ENCODE measurements at regions of chr5 and their contacts with region 1.

Region 1: DNA sequence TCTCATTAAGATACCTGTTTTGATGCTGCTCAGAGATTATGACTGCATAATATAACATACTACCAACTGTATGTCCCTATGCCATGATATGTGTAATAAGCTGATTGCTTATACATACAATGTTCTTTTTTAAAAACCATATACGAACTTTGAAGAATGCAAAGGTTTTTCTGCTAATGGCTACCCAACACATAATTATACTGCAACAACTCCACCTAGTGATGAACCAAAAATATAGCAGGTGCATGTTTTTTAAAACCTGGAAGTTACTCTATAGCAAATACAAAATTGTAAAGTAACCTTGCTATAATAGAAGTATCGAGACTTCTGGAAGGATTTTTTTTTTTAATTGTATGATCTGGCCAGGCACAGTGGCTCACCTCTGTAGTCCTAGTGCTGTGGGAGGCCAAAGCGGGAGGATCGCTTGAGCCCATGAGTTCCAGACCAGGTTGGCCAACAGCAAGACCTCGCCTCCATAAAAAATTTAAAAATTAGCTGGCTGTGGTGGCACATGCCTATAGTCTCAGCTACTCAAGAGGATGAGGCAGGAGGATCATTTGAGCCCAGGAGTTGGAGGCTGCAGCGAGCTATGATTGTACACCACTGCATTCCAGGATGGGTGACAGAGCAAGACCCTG is 49.1 kb downstream of the HOMER1 start:
- DNase-seq: no peak

Region 2: GRCh38 chr5:79020861-79021561 is 443.8 kb before region 1 on chr5:
- intact Hi-C with region 1: loop called (anchors 5 kb)
- DNase-seq: no peak

Region 3: DNA sequence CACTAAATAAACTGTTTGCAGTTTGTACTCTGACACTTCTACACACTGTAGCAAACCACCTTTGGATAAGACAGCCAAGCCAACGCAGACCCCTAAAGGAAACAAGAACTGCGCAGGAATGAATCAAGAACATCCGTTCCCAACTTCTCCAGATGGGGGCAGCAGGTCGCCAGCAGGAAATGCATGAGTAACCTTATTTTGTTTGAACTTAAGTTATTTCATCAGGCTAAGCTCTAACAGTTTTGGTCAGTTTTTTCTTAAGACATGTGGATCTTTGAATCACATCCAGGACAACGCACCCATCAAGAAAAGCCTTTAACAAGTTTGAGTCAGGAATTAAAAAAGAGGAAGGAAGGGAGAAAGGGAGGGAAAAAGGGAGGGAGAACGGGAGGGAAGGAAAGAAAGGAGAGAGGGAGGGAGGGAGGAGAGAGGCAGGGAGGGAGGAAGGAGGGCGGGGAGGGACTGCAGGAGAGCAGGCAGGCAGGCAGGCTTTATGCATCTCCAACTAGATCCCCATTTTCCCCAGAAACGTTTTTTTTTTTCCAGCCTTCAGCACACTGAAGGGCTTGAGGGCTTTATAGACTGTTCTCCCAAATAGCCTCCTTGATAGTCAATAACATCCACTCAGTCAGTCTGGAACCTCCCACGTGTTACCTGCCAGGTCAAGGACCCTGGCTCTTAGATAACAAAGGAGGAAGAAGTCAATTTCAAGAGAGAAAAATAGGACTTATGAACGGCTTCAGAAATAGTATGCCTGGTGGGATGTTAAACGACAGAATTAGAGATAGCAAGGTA is 331.0 kb before region 1 on chr5:
- intact Hi-C with region 1: loop called (anchors 5 kb)
- DNase-seq: no peak

Region 4: DNA sequence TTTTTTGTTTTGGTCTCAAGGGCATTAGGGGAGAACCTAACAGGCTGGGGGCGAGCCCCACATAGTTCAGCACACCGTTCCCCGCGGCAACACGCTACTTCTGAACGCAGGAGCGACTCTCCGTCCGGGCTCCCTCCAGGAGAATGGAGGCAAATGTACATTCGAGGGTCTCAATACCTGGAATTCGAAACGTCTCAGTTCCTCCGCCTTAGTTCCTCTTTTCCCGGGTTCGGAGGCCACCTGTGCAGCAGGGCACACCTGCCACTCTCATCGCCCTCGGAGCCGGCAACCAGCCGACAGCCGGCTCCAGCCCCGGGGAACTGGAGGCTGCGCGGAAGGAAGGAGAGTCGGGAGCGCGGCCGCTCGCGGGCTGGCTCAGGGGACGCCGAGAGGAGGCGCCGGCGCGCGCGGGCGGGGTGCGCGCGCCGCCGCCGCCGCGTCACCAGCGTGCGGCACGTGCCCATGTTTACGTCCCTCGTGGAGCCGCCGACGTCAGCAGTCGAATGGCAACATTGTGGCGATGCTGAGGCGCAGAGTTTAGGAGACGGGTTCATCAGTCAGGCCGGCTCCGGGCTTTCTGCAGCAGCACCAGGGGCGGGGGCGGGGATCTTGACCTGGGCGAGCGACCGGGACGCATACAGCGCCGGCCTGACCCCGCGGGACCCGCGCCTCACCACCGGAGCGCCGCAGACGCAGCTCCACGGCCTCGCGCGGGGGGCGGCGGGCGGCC is 229.0 kb before region 1 on chr5 and contains the start of gene JMY:
- intact Hi-C with region 1: loop called (anchors 5 kb)
- DNase-seq: peak; percentile 94
- total RNA-seq, gene JMY: 10.3 TPM

Measured in cardiac septum (tissue), 1 donor.